AG04450 (cell line): ENCODE measurements at regions of chr5 and their contacts with region 1.

Region 1: GRCh38 chr5:124001036-124001615 is 489.1 kb downstream of the CSNK1G3 start:
- DNase-seq: no peak
- H3K4me3 ChIP-seq: no peak overlapping the region
- H3K27ac ChIP-seq: no peak overlapping the region
- H3K27me3 ChIP-seq: no peaks in the 10 kb centered on the region
- CTCF ChIP-seq: no peak

Region 2: GRCh38 chr5:123671711-123672456 is 329.2 kb before region 1 on chr5:
- CTCF ChIA-PET with region 1: interaction called, 12 read pairs
- POLR2A ChIA-PET with region 1: no interaction called
- DNase-seq: no peak
- H3K4me3 ChIP-seq: no peak overlapping the region
- H3K27ac ChIP-seq: no peak overlapping the region
- H3K27me3 ChIP-seq: no peaks in the 10 kb centered on the region
- CTCF ChIP-seq: no peak

Region 3: DNA sequence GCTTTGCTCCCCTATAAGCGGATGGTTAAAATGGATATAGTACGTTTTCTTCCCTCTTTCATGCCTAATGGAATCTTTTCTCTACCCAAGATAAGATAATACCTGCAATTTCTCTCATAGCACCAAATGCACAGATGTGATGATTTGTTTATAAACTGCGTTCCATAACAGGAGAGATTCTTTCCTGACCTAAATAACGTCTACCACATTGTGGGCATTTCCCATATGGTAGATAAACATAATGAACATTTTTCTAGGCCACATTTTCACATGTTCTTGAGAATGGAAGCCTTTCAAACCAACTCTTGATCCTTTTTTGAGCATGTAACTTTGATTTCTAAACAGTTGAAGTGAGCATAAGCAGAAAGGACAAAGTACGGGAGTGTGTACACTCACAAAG is 40.6 kb before region 1 on chr5:
- CTCF ChIA-PET with region 1: no interaction called
- POLR2A ChIA-PET with region 1: interaction called, 10 read pairs
- DNase-seq: no peak
- H3K4me3 ChIP-seq: no peak overlapping the region
- H3K27ac ChIP-seq: no peak overlapping the region
- H3K27me3 ChIP-seq: no peaks in the 10 kb centered on the region
- CTCF ChIP-seq: no peak